Mammary epithelial cell (primary cell): ENCODE measurements at regions of chr7 and their contacts with region 1.

Region 1: GRCh38 chr7:93231799-93232672 is at the start of gene VPS50:
- DNase-seq: peak; percentile 98
- H3K4me3 ChIP-seq: peak within 1 kb of the TSS; percentile 84 to 93 (median 91)
- H3K27ac ChIP-seq: peak within 1 kb of the TSS; percentile 88
- H3K4me1 ChIP-seq: no peaks in the 10 kb centered on the region
- H3K27me3 ChIP-seq: no peaks in the 10 kb centered on the region
- CTCF ChIP-seq: peak in 1 of 2 donors; percentile 2
- total RNA-seq, gene VPS50: 18.4 to 31.3 TPM

Region 2: DNA sequence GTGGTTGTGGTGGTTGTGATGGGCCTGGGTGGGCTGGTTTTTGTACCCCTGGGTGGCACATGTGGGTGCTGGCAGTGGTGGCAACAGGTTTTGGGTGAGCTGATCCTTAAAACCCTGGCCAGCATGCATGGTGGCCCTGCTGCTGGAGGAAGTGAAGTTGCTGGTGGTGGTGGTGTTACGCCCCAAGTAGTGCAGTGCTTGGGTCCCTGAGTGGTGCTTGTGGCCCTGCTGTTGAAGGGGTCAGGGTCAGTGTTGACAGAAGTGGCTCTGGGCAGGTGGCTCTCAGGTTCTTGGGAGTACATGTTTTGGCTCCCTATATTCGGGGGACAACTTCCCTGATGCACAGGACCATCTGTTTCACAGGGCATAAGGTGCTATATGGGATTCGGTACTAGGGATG is 145.3 kb before region 1 on chr7:
- CTCF ChIA-PET with region 1: no interaction called
- dilution Hi-C with region 1: no loop called
- in situ Hi-C with region 1: loop called in 1 of 2 experiments (anchors 10 kb)
- intact Hi-C with region 1: no loop called
- DNase-seq: no peak
- H3K4me3 ChIP-seq: no peak overlapping the region
- H3K27ac ChIP-seq: no peak overlapping the region
- H3K4me1 ChIP-seq: no peaks in the 10 kb centered on the region
- H3K27me3 ChIP-seq: no peaks in the 10 kb centered on the region
- CTCF ChIP-seq: no peak

Region 3: GRCh38 chr7:93092757-93093370 is 139.2 kb before region 1 on chr7:
- CTCF ChIA-PET with region 1: no interaction called
- dilution Hi-C with region 1: no loop called
- in situ Hi-C with region 1: loop called in 1 of 2 experiments (anchors 10 kb)
- intact Hi-C with region 1: loop called (anchors 1 kb)
- DNase-seq: peak; percentile 38
- H3K4me3 ChIP-seq: no peak overlapping the region
- H3K27ac ChIP-seq: no peak overlapping the region
- H3K4me1 ChIP-seq: no peaks in the 10 kb centered on the region
- H3K27me3 ChIP-seq: peaks cover 2% of the 10 kb centered on the region
- CTCF ChIP-seq: peak; percentile 62 to 69

Region 4: GRCh38 chr7:93117852-93118530 is 114.0 kb before region 1 on chr7 and contains the start of gene SAMD9:
- CTCF ChIA-PET with region 1: no interaction called
- dilution Hi-C with region 1: no loop called
- in situ Hi-C with region 1: no loop called
- intact Hi-C with region 1: loop called (anchors 1 kb)
- DNase-seq: peak; percentile 72
- H3K4me3 ChIP-seq: peak within 1 kb of the TSS; percentile 38 to 58 (median 52)
- H3K27ac ChIP-seq: peak within 1 kb of the TSS; percentile 90
- H3K4me1 ChIP-seq: peaks cover 35% of the 10 kb centered on the region
- H3K27me3 ChIP-seq: no peaks in the 10 kb centered on the region
- CTCF ChIP-seq: no peak
- total RNA-seq, gene SAMD9: 9.9 to 12.0 TPM

Region 5: DNA sequence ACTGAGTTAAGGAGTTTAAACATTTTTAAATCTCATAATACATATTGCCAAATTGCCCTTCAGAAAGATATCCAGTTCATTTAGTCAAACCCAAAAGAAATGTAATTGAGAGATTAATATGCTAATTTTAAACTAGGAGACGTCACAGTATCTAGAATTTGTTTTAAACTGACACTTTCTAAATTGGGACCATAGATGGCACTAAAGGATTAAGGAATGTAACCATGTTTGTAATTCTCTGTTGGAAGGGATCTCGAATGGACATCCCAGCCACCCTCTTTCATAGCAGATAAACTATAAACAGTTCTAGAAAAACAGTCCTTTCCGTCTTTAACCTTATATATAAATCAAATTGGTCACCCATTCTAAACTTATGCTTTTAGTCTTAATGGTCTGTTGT is 53.8 kb before region 1 on chr7:
- CTCF ChIA-PET with region 1: no interaction called
- dilution Hi-C with region 1: no loop called
- in situ Hi-C with region 1: no loop called
- intact Hi-C with region 1: loop called (anchors 1 kb)
- DNase-seq: no peak
- H3K4me3 ChIP-seq: no peak overlapping the region
- H3K27ac ChIP-seq: no peak overlapping the region
- H3K4me1 ChIP-seq: no peaks in the 10 kb centered on the region
- H3K27me3 ChIP-seq: peaks cover 6% of the 10 kb centered on the region
- CTCF ChIP-seq: peak; percentile 34 to 40

Region 6: GRCh38 chr7:93194386-93194785 is 37.6 kb before region 1 on chr7:
- CTCF ChIA-PET with region 1: no interaction called
- dilution Hi-C with region 1: no loop called
- in situ Hi-C with region 1: no loop called
- intact Hi-C with region 1: loop called (anchors 5 kb)
- DNase-seq: peak; percentile 59
- H3K4me3 ChIP-seq: no peak overlapping the region
- H3K27ac ChIP-seq: no peak overlapping the region
- H3K4me1 ChIP-seq: no peaks in the 10 kb centered on the region
- H3K27me3 ChIP-seq: peaks cover 9% of the 10 kb centered on the region
- CTCF ChIP-seq: no peak